HAP-1 (cell line): ENCODE measurements at regions of chr22 and their contacts with region 1.

Region 1: DNA sequence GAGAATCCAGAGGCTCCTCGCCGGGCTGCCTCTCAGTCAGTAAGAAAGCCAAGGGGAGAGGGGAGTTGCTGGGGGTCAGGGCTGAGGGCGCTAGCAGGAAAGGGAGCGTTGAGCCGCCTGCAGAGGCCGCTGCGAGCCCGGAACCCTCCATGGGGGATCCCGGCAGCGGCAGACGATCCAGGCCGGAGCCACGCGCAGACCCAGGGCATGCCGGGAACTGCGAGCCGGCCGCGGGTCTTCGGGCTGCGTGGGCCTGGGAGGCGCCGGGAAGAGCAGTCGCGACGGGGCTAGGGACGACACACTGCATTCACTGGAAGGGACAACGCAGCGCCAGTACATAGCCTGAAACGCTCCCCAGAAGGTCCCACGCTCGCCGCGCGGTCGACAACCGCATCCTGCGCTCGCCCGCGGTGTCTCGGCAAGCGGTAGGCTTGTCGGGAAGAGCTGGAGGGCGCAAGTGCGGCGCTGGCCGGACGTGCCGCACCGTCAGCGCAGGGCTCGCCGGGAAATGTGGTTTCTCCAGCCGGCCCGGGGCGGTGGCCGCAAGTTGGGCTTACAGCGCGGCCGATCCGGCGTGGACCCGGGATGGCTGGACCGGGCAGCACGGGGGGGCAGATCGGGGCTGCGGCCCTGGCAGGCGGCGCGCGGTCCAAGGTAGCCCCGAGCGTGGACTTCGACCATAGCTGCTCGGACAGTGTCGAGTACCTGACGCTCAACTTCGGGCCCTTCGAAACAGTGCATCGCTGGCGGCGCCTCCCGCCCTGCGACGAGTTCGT is at the start of gene LZTR1:
- DNase-seq: peak; percentile 57 to 82
- H3K4me3 ChIP-seq: peak within 1 kb of the TSS; percentile 82
- H3K4me1 ChIP-seq: peaks cover 9% of the 10 kb centered on the region
- H3K27me3 ChIP-seq: no peaks in the 10 kb centered on the region

Region 2: DNA sequence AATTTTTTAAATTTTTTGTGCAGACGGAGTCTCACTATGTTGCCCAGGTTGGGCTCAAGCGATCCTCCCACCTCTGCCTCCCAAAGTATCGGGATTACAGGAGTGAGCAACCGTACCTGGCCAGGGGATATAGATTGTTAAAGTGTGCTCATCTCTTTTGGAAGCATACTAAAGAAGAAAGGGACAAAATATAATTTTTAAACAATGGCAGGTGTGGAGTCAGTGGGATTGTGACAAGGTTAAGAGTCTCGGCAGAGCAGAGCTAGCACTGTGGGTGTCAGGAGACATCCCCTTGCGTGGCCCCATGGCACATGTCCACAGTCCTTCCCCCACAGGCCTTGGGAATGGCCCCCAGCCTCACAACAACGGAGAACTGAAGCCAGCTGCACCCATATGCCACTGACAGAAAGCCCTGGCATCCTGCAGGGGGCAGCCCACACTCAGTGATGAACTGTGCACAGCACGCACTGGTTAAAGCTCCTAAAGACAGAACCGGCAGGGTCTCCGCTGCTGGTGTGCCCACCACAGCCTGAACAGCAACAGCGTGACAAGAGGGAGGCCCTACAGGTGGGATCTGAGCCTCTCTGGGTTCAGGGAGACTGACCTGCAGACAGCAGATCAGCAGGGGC is 178.2 kb before region 1 on chr22:
- in situ Hi-C with region 1: loop called (anchors 10 kb)
- DNase-seq: peak in 1 of 2 experiments; percentile 60
- H3K4me3 ChIP-seq: no peak overlapping the region
- H3K4me1 ChIP-seq: no peaks in the 10 kb centered on the region
- H3K27me3 ChIP-seq: no peaks in the 10 kb centered on the region

Region 3: DNA sequence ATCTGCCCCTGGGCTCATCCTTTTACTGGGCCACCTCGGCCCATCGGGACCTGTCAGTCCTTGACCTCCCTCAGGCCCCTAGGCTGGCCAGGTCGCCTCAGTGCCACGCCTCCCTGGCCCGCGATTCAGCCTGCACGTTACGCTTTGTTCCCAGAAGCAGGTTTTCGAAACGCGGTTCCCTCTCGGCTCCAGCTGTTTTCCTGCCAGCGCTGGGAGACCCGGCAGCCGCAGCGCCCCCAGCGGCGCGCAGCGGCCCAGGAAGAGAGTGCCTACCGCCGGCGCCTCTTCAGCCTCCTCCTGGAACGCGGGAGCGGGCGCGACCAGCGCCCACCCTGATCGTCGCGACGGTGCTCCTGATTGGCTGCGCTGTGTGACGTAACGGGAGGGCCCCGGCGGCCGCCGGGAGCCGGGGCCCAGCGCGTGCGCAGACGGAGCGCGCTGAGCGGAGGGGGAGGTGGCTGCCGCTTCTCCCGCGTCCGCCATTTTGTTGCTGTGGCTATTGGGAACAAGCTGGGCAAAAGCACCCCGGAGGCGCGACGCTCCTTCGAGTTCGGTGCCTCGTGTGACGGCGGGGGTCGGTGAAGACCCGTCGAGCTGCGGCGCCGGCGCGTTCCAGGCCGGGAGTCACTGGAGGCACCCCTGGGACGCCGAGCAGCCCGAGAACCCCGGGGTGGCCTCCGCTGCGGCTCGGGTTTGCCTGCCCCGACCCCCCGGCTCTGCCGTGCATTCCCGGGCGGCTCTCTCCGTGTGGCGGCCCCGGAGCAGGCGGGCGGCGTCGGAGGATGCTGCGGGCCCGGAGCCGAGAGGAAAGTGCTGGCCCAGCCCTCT is 64.8 kb before region 1 on chr22 and contains the start of gene CRKL:
- in situ Hi-C with region 1: loop called (anchors 10 kb)
- DNase-seq: peak; percentile 96 to 98
- H3K4me3 ChIP-seq: peak within 1 kb of the TSS; percentile 96
- H3K4me1 ChIP-seq: peaks cover 13% of the 10 kb centered on the region
- H3K27me3 ChIP-seq: no peaks in the 10 kb centered on the region